GM13977 (cell line): ENCODE measurements at regions of chr11 and their contacts with region 1.

Region 1: GRCh38 chr11:20355221-20356219 is 8.0 kb upstream of the HTATIP2 start:
- DNase-seq: peak; percentile 32
- CTCF ChIP-seq: peak; percentile 58

Region 2: GRCh38 chr11:18721561-18722292 is 1633.8 kb before region 1 on chr11:
- in situ Hi-C with region 1: no loop called
- DNase-seq: peak; percentile 71
- CTCF ChIP-seq: peak; percentile 74

Region 3: DNA sequence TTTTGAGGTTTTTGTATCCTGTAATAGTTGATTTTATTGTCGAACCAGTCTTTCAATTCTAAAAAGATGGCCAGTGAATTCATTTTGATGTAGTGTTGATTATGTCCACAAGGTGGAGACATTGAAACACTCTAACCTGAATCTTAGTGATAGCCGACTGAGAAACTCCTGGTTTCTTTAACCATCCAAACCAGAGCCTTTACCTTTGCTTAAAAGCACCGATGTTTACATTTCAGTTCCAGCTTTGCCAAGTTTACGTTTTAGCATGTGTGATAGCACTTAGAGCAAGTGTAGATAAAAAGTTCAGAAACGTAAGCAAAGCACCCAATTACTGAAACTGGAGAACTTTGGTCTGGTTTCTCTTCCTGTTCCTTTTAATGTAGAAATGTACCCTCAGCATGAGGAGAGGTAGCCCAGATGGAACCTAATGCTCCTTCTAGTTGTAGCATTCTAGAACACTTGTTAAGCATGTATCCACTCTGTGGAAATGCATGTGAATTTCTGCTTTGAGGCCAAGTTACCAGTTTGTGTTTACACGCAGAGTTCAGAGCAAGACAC is 403.9 kb before region 1 on chr11:
- in situ Hi-C with region 1: loop called (anchors 25 kb)
- DNase-seq: peak; percentile 48
- CTCF ChIP-seq: peak; percentile 55

Region 4: GRCh38 chr11:20522536-20522935 is 167.0 kb after region 1 on chr11:
- in situ Hi-C with region 1: no loop called
- DNase-seq: no peak
- CTCF ChIP-seq: no peak